A549 (cell line): ENCODE measurements at regions of chr22 and their contacts with region 1.

Region 1: GRCh38 chr22:28829358-28830181 is 29.2 kb upstream of the XBP1 start:
- DNase-seq: peak; percentile 41 to 64
- ATAC-seq: peak; percentile 80 to 91; a peak in 5 of 6 replicates
- H3K4me3 ChIP-seq: no peak overlapping the region
- H3K27ac ChIP-seq: peak overlapping the region in 1 of 2 experiments; percentile 40; a peak in 2 of 6 replicates
- H3K4me1 ChIP-seq: no peaks in the 10 kb centered on the region
- CTCF ChIP-seq: peak; percentile 90
- EP300 ChIP-seq: no peak
- POLR2A ChIP-seq: no peak
- RAD21 ChIP-seq: peak; percentile 93 to 95

Region 2: GRCh38 chr22:28019881-28020871 is 809.4 kb before region 1 on chr22:
- CTCF ChIA-PET with region 1: interaction called, 11 read pairs
- POLR2A ChIA-PET with region 1: no interaction called
- DNase-seq: peak; percentile 44 to 55
- ATAC-seq: peak; percentile 74 to 96
- H3K4me3 ChIP-seq: no peak overlapping the region
- H3K27ac ChIP-seq: no peak overlapping the region
- H3K4me1 ChIP-seq: peaks cover 8% of the 10 kb centered on the region; the same call in 1 of the 3 replicates
- CTCF ChIP-seq: peak; percentile 68
- EP300 ChIP-seq: no peak
- POLR2A ChIP-seq: no peak
- RAD21 ChIP-seq: peak; percentile 75

Region 3: GRCh38 chr22:28594797-28595462 is 234.6 kb before region 1 on chr22:
- CTCF ChIA-PET with region 1: interaction called, 79 read pairs
- POLR2A ChIA-PET with region 1: no interaction called
- DNase-seq: peak; percentile 9 to 61
- ATAC-seq: peak; percentile 92 to 95
- H3K4me3 ChIP-seq: no peak overlapping the region
- H3K27ac ChIP-seq: no peak overlapping the region
- H3K4me1 ChIP-seq: peaks cover 29% of the 10 kb centered on the region
- CTCF ChIP-seq: peak; percentile 76
- EP300 ChIP-seq: no peak
- POLR2A ChIP-seq: no peak
- RAD21 ChIP-seq: peak; percentile 87 to 91

Region 4: DNA sequence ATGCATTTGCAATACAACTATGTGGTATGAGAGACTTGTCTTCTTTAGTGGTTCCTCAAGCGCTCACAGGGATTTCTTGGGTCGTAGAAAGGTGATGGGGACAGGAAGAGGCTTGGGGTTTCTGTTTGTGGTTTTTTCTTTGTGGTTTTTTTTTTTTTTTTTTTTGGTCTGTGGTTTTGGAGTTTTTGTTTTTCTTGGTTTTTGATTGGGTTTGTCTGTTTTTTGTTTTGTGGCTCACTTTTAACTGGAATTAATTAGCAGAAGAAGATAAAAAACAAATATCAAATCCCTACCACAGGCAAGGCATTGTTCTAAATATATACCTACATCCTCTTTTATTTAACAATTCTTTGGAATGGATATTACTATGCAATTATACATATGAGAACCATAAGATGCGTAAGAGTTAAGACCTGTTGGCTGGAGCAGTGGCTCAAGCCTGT is 155.4 kb before region 1 on chr22:
- CTCF ChIA-PET with region 1: no interaction called
- POLR2A ChIA-PET with region 1: no interaction called
- DNase-seq: no peak
- ATAC-seq: no peak
- H3K4me3 ChIP-seq: no peak overlapping the region
- H3K27ac ChIP-seq: no peak overlapping the region
- H3K4me1 ChIP-seq: no peaks in the 10 kb centered on the region
- CTCF ChIP-seq: no peak
- EP300 ChIP-seq: no peak
- POLR2A ChIP-seq: no peak
- RAD21 ChIP-seq: no peak

Region 5: DNA sequence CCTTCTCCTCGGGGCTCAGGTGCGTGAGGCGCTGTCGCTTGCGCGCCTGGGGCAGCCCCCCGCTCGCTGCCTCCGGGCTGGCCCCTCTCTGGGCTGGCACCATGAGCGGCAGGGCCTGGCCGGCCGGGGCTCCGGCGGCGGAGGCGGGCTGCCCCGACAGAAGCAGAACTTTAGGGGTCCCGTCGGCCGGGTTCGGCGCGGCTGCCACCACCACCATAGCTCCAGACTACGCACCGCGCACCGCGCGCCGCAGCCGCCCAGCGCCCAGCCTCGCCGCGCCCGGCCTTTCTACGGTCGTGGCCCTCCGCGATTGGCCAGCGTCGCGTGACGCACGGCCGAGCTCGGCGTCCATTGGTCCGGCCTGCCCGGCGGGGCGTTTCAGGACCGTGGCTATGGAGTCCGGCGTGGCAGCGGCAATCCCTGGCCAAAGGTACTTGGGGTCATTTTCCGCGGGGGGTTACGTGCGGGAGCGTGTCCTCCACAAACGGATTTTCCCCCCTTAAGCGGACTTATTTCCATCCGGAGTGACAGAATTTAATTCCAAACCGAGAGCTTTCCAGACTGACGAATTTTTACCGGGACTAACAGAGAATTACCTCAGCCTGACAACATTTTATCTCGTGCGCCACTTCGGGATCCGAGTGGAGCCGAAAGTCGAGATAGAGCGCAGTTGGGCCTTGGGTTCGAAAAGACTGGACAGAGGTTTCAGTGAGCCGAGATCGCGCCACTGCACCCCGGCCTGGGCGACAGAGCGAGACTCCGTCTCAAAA is 29.1 kb before region 1 on chr22 and contains the start of gene XBP1:
- CTCF ChIA-PET with region 1: interaction called, 10 read pairs
- POLR2A ChIA-PET with region 1: interaction called, 8 read pairs
- DNase-seq: peak; percentile 90 to 91
- ATAC-seq: peak; percentile 94 to 97
- H3K4me3 ChIP-seq: peak within 1 kb of the TSS; percentile 72
- H3K27ac ChIP-seq: peak within 1 kb of the TSS; percentile 91 to 100
- H3K4me1 ChIP-seq: peaks cover 35% of the 10 kb centered on the region; the same call in 2 of the 3 replicates
- CTCF ChIP-seq: no peak
- EP300 ChIP-seq: no peak
- POLR2A ChIP-seq: peak; percentile 86
- RAD21 ChIP-seq: no peak
- polyA plus RNA-seq, gene XBP1: 172 and 207 TPM in 2 replicates

Region 6: GRCh38 chr22:28817919-28818909 is 11.4 kb before region 1 on chr22:
- CTCF ChIA-PET with region 1: interaction called, 27 read pairs
- POLR2A ChIA-PET with region 1: no interaction called
- DNase-seq: no peak
- ATAC-seq: no peak
- H3K4me3 ChIP-seq: no peak overlapping the region
- H3K27ac ChIP-seq: peak overlapping the region; percentile 56 to 69
- H3K4me1 ChIP-seq: peaks cover 55% of the 10 kb centered on the region
- CTCF ChIP-seq: no peak
- EP300 ChIP-seq: no peak
- POLR2A ChIP-seq: no peak
- RAD21 ChIP-seq: no peak